Endothelial cell of umbilical vein (primary cell): ENCODE measurements at regions of chr12 and their contacts with region 1.

Region 1: DNA sequence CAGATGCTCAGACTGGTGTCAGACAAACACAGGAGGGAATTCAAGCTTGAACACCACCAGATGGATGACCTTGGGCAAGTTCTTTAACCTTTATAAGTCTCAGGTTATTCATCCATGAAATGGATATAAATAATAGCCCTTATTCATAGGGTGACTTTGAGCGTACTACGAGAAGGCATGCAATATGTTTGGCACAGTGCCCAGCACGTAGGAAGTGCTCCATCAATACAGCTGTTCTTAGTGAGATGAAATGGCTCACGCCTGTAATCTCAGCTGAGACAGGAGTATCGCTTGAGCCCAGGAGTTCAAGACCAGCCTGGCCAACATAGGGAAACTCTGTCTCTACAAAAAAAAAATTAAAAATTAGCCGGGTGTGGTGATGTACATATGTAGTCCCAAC is 84.8 kb upstream of the FICD start:
- DNase-seq: no peak
- H3K4me3 ChIP-seq: no peak overlapping the region
- H3K27ac ChIP-seq: no peak overlapping the region
- H3K4me1 ChIP-seq: no peaks in the 10 kb centered on the region
- H3K27me3 ChIP-seq: no peaks in the 10 kb centered on the region
- CTCF ChIP-seq: no peak
- POLR2A ChIP-seq: no peak

Region 2: GRCh38 chr12:108320507-108321293 is 109.5 kb before region 1 on chr12:
- CTCF ChIA-PET with region 1: no interaction called
- POLR2A ChIA-PET with region 1: no interaction called
- dilution Hi-C with region 1: no loop called
- intact Hi-C with region 1: loop called (anchors 10 kb)
- DNase-seq: no peak
- H3K4me3 ChIP-seq: no peak overlapping the region
- H3K27ac ChIP-seq: no peak overlapping the region
- H3K4me1 ChIP-seq: no peaks in the 10 kb centered on the region
- H3K27me3 ChIP-seq: peaks cover 4 to 10% of the 10 kb centered on the region in 2 experiments
- CTCF ChIP-seq: no peak
- POLR2A ChIP-seq: no peak

Region 3: GRCh38 chr12:108850854-108851573 is 420.8 kb after region 1 on chr12:
- CTCF ChIA-PET with region 1: no interaction called
- POLR2A ChIA-PET with region 1: no interaction called
- dilution Hi-C with region 1: no loop called
- intact Hi-C with region 1: no loop called
- DNase-seq: peak; percentile 95
- H3K4me3 ChIP-seq: peak overlapping the region in 2 of 3 experiments; percentile 47 to 74
- H3K27ac ChIP-seq: peak overlapping the region; percentile 98
- H3K4me1 ChIP-seq: peaks cover 51% of the 10 kb centered on the region
- H3K27me3 ChIP-seq: no peaks in the 10 kb centered on the region
- CTCF ChIP-seq: peak; percentile 20 to 28
- POLR2A ChIP-seq: no peak